ENCODE measurements at regions of chr5 and their contacts with region 1.

Region 1: DNA sequence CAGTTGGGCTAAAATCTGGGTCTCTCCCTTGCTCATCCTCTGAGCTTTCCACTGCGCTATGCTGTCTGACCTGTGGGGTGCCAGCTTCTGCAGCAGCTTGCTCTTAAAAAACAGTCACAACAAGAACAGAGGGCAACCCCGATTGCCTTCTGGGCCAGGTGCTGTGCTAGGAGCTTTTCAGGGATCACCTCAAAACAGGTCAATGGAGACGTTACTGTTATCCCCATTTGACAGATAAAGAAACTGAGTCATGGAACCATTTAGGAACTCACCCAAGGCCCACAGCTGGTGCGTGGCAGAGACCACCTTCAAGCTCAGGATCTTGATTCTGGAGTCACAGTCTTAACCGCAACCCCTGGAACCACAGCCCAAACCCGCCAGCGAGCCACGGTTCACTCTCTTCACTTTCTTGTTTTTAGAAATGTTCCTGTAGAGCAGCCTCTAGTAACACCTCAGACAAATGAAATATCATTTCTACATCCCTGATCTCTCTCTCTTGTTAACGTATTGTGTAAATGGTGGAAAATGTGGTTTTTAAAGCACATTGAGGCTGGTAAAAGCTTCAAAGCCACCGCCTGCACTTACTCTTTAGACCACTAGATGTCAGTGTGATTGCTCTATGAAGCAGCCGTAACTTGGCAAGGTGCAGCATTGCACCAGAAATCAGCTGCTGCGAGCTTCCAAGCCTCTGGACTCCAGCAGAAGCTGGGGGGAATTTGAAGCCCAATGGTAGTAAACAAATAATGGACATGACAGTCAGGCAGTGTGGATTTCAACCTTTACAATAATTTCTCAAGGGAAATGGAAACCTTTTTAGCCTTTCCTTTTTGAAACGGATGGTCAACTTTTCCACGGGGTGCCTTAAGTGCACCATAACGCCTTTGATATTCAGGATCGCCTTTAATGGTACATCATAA is 1.7 kb downstream of the FYB1 start:
- DNase-seq: peak; percentile 74
- H3K4me3 ChIP-seq: no peak overlapping the region
- H3K27ac ChIP-seq: no peak overlapping the region
- H3K4me1 ChIP-seq: no peaks in the 10 kb centered on the region
- H3K27me3 ChIP-seq: no peaks in the 10 kb centered on the region
- CTCF ChIP-seq: peak; percentile 85 to 90
- POLR2A ChIP-seq: no peak

Region 2: DNA sequence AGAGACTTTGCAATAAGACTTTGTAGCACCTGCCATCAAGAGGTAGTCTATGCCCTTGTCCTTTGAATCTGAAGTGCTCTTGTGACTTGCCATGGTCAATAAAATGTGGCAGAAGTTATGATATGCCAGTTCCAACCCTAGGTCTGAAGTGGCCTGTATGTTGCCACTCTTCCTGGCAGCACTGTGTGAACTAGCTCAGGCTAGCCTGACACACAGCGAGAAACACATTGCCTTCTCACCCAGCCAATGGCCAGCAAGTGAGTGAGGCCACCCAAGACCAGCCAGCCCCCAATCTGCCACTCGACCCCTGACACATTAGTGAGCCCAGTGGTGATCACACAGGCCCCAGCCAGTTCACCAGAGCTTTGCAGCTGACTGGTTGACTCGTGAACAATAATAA is 424.5 kb before region 1 on chr5:
- CTCF ChIA-PET with region 1: no interaction called
- POLR2A ChIA-PET with region 1: no interaction called
- dilution Hi-C with region 1: no loop called
- intact Hi-C with region 1: no loop called
- DNase-seq: no peak
- H3K4me3 ChIP-seq: no peak overlapping the region
- H3K27ac ChIP-seq: no peak overlapping the region
- H3K4me1 ChIP-seq: peaks cover 19% of the 10 kb centered on the region
- H3K27me3 ChIP-seq: no peaks in the 10 kb centered on the region
- CTCF ChIP-seq: no peak
- POLR2A ChIP-seq: no peak

Region 3: DNA sequence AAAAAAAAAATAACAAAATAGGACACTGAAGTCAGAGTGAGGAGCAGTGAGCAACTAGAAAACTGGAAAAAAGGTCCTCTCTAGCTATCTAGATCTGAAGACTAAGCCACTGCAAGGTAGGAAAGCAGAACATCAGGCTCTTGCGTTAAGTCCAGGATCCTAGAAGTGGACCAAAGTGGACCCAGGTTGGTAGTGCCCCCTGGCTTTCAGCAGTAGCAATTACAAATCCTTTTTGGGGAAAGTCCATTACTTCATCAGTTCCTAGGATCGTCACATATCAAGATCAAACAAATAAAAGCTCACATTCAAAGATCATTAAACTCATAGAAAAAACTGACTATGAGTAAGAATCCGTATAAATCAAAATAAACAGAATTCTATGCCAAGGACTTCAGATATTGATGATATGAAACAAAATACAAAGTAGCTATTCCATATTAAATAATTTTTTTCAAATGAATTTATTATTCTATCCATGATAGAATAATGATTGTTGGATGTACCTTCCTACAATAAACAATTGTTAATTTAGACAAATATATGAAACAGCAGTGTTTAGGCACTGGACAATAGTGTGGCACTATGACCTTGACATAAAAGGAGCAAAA is 136.9 kb before region 1 on chr5:
- CTCF ChIA-PET with region 1: interaction called, 23 read pairs
- POLR2A ChIA-PET with region 1: no interaction called
- dilution Hi-C with region 1: no loop called
- intact Hi-C with region 1: loop called (anchors 10 kb)
- DNase-seq: peak; percentile 73
- H3K4me3 ChIP-seq: no peak overlapping the region
- H3K27ac ChIP-seq: peak overlapping the region; percentile 47
- H3K4me1 ChIP-seq: peaks cover 28% of the 10 kb centered on the region
- H3K27me3 ChIP-seq: no peaks in the 10 kb centered on the region
- CTCF ChIP-seq: peak; percentile 72 to 74
- POLR2A ChIP-seq: no peak

Region 4: DNA sequence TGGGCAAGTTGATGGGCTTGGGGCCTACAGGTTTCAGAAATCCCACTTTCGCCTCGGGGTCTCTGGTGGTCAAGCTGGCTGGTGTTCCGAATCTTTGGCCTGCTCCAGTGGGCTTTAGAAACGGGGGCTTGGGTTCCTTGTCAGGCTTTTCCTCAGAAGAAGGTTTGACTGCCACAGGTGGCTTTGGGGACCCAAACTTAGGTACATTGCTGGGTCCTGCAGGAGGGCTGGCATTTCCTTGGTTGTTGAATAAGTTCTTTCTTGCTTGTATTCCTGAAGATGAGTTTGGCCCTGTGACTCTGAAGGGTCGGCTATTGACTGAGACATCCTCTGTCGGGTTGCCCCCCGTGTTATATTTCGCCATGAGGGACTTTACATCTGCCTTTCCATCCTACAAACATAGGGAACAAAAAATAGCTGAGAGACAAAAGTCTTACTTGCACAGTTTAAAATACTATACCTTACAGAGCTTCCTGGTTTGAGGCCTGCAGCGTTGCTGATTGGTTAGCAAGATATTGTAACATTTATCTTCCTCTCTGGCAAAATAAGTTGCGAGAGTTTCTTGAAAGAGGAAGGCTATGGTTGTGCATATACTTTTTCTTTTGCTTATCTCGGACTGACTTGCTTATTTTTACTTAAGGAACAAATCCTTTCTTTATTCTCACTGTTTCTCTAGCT is 14.9 kb before region 1 on chr5:
- CTCF ChIA-PET with region 1: interaction called, 21 read pairs
- POLR2A ChIA-PET with region 1: no interaction called
- dilution Hi-C with region 1: no loop called
- intact Hi-C with region 1: no loop called
- DNase-seq: no peak
- H3K4me3 ChIP-seq: no peak overlapping the region
- H3K27ac ChIP-seq: no peak overlapping the region
- H3K4me1 ChIP-seq: no peaks in the 10 kb centered on the region
- H3K27me3 ChIP-seq: no peaks in the 10 kb centered on the region
- CTCF ChIP-seq: no peak
- POLR2A ChIP-seq: no peak

Region 5: DNA sequence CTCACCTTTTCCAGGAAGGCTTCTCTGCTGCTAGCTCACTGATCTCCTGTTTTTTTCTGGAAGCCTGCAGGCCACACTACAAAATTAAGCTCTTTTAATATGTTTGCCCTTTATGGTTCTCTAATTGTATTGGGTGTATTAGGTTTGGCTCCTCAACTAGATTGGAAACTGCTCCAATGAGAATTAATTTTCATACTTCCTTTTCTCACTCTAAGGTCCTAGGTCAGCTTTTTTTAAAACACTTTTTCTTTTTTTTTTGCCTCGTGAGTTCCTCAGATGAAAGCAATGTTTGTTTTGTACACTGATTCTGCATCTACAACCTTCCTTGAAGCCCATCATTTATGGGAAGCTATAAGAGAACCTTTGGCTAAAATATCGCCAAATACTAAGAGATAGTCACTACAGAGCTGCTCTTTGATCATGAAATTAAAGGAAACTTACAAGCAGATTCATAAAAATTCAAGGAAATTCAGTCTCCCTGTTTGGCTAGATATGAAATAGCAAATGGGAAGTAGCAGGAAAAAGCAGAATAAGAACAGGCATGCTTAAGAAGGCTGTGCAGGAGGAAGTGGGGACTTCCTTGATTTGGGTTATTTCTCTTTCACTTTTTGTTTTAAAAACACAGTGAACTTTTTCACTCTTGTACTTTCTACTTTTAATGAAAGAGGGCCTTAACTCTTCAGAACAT is 56.9 kb after region 1 on chr5:
- CTCF ChIA-PET with region 1: interaction called, 18 read pairs
- POLR2A ChIA-PET with region 1: no interaction called
- dilution Hi-C with region 1: no loop called
- intact Hi-C with region 1: no loop called
- DNase-seq: peak; percentile 67
- H3K4me3 ChIP-seq: peak overlapping the region in 2 of 3 experiments; percentile 13 to 57
- H3K27ac ChIP-seq: no peak overlapping the region
- H3K4me1 ChIP-seq: peaks cover 9% of the 10 kb centered on the region
- H3K27me3 ChIP-seq: no peaks in the 10 kb centered on the region
- CTCF ChIP-seq: no peak
- POLR2A ChIP-seq: no peak

Region 6: GRCh38 chr5:39360471-39361111 is 143.0 kb after region 1 on chr5:
- CTCF ChIA-PET with region 1: interaction called, 10 read pairs
- POLR2A ChIA-PET with region 1: no interaction called
- dilution Hi-C with region 1: no loop called
- intact Hi-C with region 1: loop called (anchors 5 kb)
- DNase-seq: peak; percentile 89
- H3K4me3 ChIP-seq: peak overlapping the region in 1 of 3 experiments; percentile 18
- H3K27ac ChIP-seq: peak overlapping the region; percentile 99
- H3K4me1 ChIP-seq: peaks cover 44% of the 10 kb centered on the region
- H3K27me3 ChIP-seq: no peaks in the 10 kb centered on the region
- CTCF ChIP-seq: no peak
- POLR2A ChIP-seq: no peak

Region 7: DNA sequence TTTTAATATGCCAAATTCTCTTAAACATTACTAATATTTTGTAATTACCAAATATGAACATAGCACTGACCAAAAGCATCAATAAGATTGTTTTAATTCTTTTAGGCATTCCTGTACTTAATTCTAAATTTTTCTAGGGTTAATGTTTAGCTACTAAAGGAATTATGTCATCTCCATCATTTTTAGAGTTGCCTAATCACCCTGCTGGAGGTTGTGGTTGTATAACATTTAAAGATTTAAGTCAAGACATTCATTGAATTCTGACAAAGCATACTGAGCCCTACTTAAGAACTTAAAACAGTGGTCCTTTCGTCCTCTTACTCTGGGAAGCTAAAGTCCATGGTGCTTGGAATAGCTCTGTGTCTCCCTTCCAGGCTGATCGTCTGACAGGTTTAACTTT is 235.2 kb after region 1 on chr5:
- CTCF ChIA-PET with region 1: no interaction called
- POLR2A ChIA-PET with region 1: no interaction called
- dilution Hi-C with region 1: no loop called
- intact Hi-C with region 1: no loop called
- DNase-seq: no peak
- H3K4me3 ChIP-seq: no peak overlapping the region
- H3K27ac ChIP-seq: no peak overlapping the region
- H3K4me1 ChIP-seq: peaks cover 5% of the 10 kb centered on the region
- H3K27me3 ChIP-seq: no peaks in the 10 kb centered on the region
- CTCF ChIP-seq: no peak
- POLR2A ChIP-seq: no peak

Region 8: GRCh38 chr5:39547553-39548154 is 330.0 kb after region 1 on chr5:
- CTCF ChIA-PET with region 1: interaction called, 29 read pairs
- POLR2A ChIA-PET with region 1: no interaction called
- dilution Hi-C with region 1: no loop called
- intact Hi-C with region 1: loop called (anchors 1 kb)
- DNase-seq: peak; percentile 85
- H3K4me3 ChIP-seq: no peak overlapping the region
- H3K27ac ChIP-seq: peak overlapping the region; percentile 15
- H3K4me1 ChIP-seq: peaks cover 25% of the 10 kb centered on the region
- H3K27me3 ChIP-seq: no peaks in the 10 kb centered on the region
- CTCF ChIP-seq: peak; percentile 54 to 55
- POLR2A ChIP-seq: no peak

Measured in endothelial cell of umbilical vein (primary cell).